ENCODE measurements at regions of chr1 and their contacts with region 1.

Region 1: GRCh38 chr1:156146020-156146768 is 7.2 kb upstream of the SEMA4A start:
- DNase-seq: peak; percentile 87 to 90
- H3K4me3 ChIP-seq: no peak overlapping the region
- H3K27ac ChIP-seq: no peak overlapping the region
- H3K4me1 ChIP-seq: no peaks in the 10 kb centered on the region
- H3K27me3 ChIP-seq: peaks cover 15% of the 10 kb centered on the region; the same call in 1 of the 2 replicates
- CTCF ChIP-seq: peak; percentile 78

Region 2: GRCh38 chr1:155623357-155623756 is 522.8 kb before region 1 on chr1:
- CTCF ChIA-PET with region 1: no interaction called
- POLR2A ChIA-PET with region 1: no interaction called
- intact Hi-C with region 1: no loop called
- DNase-seq: no peak
- H3K4me3 ChIP-seq: no peak overlapping the region
- H3K27ac ChIP-seq: no peak overlapping the region
- H3K4me1 ChIP-seq: no peaks in the 10 kb centered on the region
- H3K27me3 ChIP-seq: no peaks in the 10 kb centered on the region
- CTCF ChIP-seq: no peak

Region 3: GRCh38 chr1:156082309-156083091 is 63.7 kb before region 1 on chr1 and contains the start of gene MEX3A:
- CTCF ChIA-PET with region 1: interaction called, 11 read pairs
- POLR2A ChIA-PET with region 1: no interaction called
- intact Hi-C with region 1: no loop called
- DNase-seq: peak; percentile 44 to 79
- H3K4me3 ChIP-seq: peak within 1 kb of the TSS; percentile 100
- H3K27ac ChIP-seq: no peak within 1 kb of the TSS
- H3K4me1 ChIP-seq: peaks cover 21% of the 10 kb centered on the region
- H3K27me3 ChIP-seq: no peaks in the 10 kb centered on the region
- CTCF ChIP-seq: no peak
- total RNA-seq, gene MEX3A: 6.6 and 7.2 TPM in 2 replicates

Region 4: GRCh38 chr1:156172696-156173470 is 26.7 kb after region 1 on chr1:
- CTCF ChIA-PET with region 1: interaction called, 13 read pairs
- POLR2A ChIA-PET with region 1: no interaction called
- intact Hi-C with region 1: no loop called
- DNase-seq: no peak
- H3K4me3 ChIP-seq: no peak overlapping the region
- H3K27ac ChIP-seq: no peak overlapping the region
- H3K4me1 ChIP-seq: no peaks in the 10 kb centered on the region
- H3K27me3 ChIP-seq: 0 out of 2 replicates have a peak, but pooled peaks cover 4% of the 10 kb centered on the region
- CTCF ChIP-seq: no peak

Region 5: GRCh38 chr1:156226116-156226538 is 79.9 kb after region 1 on chr1:
- CTCF ChIA-PET with region 1: interaction called, 32 read pairs
- POLR2A ChIA-PET with region 1: interaction called, 5 read pairs
- intact Hi-C with region 1: loop called (anchors 1 kb)
- DNase-seq: no peak
- H3K4me3 ChIP-seq: no peak overlapping the region
- H3K27ac ChIP-seq: no peak overlapping the region
- H3K4me1 ChIP-seq: 0 out of 2 replicates have a peak, but pooled peaks cover 5% of the 10 kb centered on the region
- H3K27me3 ChIP-seq: no peaks in the 10 kb centered on the region
- CTCF ChIP-seq: no peak

Region 6: DNA sequence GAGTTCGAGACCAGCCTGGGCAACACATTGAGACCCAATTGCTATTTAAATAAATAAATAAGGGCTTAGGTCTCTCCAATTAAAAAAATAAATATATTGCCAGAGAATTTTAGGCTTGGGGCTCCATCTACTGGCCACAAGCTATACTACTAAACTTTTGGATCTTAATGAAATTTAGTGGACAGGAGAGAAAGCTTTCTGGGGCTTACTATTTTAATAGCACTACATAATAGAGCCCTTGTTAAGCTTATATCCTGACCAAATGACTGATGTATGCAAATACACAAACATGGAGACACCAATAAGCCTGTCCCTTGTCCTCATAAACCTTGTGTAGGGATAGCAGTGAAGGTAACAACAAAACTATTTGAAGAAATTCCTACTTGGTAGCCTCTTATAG is 173.5 kb after region 1 on chr1:
- CTCF ChIA-PET with region 1: no interaction called
- POLR2A ChIA-PET with region 1: no interaction called
- intact Hi-C with region 1: loop called (anchors 5 kb)
- DNase-seq: no peak
- H3K4me3 ChIP-seq: no peak overlapping the region
- H3K27ac ChIP-seq: no peak overlapping the region
- H3K4me1 ChIP-seq: no peaks in the 10 kb centered on the region
- H3K27me3 ChIP-seq: no peaks in the 10 kb centered on the region
- CTCF ChIP-seq: peak; percentile 78

Measured in PC-9 (cell line).